ENCODE measurements at regions of chr6 and their contacts with region 1.

Region 1: GRCh38 chr6:89805814-89806371 is 13.7 kb downstream of the MDN1 start:
- DNase-seq: no peak
- H3K4me3 ChIP-seq: no peak overlapping the region
- H3K27ac ChIP-seq: no peak overlapping the region
- H3K4me1 ChIP-seq: no peaks in the 10 kb centered on the region
- H3K27me3 ChIP-seq: no peaks in the 10 kb centered on the region
- CTCF ChIP-seq: no peak

Region 2: GRCh38 chr6:89829591-89830385 is 23.9 kb after region 1 on chr6 and contains the start of gene CASP8AP2:
- CTCF ChIA-PET with region 1: no interaction called
- POLR2A ChIA-PET with region 1: interaction called, 25 read pairs
- intact Hi-C with region 1: no loop called
- DNase-seq: peak; percentile 93 to 95
- H3K4me3 ChIP-seq: peak within 1 kb of the TSS; percentile 74
- H3K27ac ChIP-seq: peak within 1 kb of the TSS; percentile 47
- H3K4me1 ChIP-seq: 0 out of 2 replicates have a peak, but pooled peaks cover 3% of the 10 kb centered on the region
- H3K27me3 ChIP-seq: no peaks in the 10 kb centered on the region
- CTCF ChIP-seq: no peak
- total RNA-seq, gene CASP8AP2: 14.7 and 17.4 TPM in 2 replicates

Region 3: GRCh38 chr6:89862273-89862672 is 56.4 kb after region 1 on chr6:
- CTCF ChIA-PET with region 1: no interaction called
- POLR2A ChIA-PET with region 1: no interaction called
- intact Hi-C with region 1: no loop called
- DNase-seq: no peak
- H3K4me3 ChIP-seq: no peak overlapping the region
- H3K27ac ChIP-seq: no peak overlapping the region
- H3K4me1 ChIP-seq: no peaks in the 10 kb centered on the region
- H3K27me3 ChIP-seq: no peaks in the 10 kb centered on the region
- CTCF ChIP-seq: no peak

Region 4: DNA sequence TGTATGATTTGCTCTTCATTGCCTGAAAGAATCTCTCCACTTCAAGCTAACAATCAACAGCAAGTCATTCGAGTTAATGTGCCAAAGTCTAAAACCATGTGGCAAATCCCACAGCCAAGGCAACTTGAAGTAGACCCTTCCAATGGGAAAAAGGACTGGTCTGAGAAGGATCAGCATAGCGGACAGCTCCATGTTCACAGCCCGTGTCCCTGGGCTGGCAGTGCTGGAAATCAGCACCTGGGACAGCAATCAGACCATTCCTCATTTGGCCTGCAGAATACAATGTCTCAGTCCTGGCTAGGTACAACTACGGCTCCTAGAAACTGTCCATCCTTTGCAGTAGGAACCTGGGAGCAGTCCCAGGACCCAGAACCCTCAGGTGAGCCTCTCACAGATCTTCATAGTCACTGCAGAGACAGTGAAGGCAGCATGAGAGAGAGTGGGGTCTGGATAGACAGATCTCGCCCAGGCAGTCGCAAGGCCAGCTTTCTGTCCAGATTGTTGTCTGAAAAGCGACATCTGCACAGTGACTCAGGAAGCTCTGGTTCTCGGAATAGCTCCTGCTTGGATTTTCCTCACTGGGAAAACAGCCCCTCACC is 89.5 kb after region 1 on chr6:
- CTCF ChIA-PET with region 1: no interaction called
- POLR2A ChIA-PET with region 1: no interaction called
- intact Hi-C with region 1: no loop called
- DNase-seq: peak in 1 of 2 experiments; percentile 28
- H3K4me3 ChIP-seq: no peak overlapping the region
- H3K27ac ChIP-seq: no peak overlapping the region
- H3K4me1 ChIP-seq: no peaks in the 10 kb centered on the region
- H3K27me3 ChIP-seq: no peaks in the 10 kb centered on the region
- CTCF ChIP-seq: no peak

Measured in PC-9 (cell line).